ENCODE measurements at regions of chr17 and their contacts with region 1.

Region 1: GRCh38 chr17:65556014-65556909 is 5.2 kb downstream of the AXIN2 start:
- DNase-seq: peak; percentile 82
- ATAC-seq: peak; percentile 41
- H3K4me3 ChIP-seq: no peak overlapping the region
- H3K27ac ChIP-seq: peak overlapping the region; percentile 96
- H3K4me1 ChIP-seq: no peaks in the 10 kb centered on the region
- H3K27me3 ChIP-seq: no peaks in the 10 kb centered on the region; a peak in 1 of 5 replicates
- CTCF ChIP-seq: peak; percentile 94
- EP300 ChIP-seq: no peak
- POLR2A ChIP-seq: 0 out of 4 replicates have a peak, but pooled peaks of 1 of the 2 experiments have one; percentile 33
- RAD21 ChIP-seq: peak; percentile 74

Region 2: DNA sequence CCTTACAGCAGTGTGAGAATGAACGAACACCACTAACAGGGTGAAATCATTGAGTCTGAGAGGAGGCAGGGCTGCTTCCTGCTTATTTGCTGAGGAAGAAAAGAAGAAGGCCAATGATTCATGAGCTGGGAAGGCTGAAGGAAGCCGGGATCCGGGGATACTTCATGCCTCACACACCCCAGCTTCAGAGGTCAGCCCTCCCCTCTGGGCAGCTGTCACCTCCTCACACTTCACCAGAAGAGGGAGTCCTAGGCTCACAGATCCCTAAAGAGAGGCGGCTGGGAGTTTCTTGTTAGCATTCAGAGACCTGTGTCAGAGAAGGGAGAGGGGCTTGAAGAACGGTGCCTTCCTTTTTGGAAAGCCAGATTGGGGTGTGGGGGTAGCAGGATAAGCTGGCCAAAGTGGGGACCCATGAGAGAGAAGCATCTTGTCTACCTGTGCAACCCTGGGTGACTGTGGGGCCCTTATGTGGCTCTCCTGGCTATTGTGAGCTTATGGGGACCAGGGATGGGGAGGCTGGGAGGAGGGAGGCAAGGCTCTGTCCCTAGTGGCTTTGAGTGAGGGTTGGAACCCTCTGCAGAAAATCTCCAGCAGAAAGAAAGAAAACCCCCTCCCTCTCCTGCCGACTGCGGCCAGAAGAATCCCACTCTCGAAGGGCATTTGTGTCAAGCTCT is 324.5 kb before region 1 on chr17:
- CTCF ChIA-PET with region 1: no interaction called
- POLR2A ChIA-PET with region 1: no interaction called
- in situ Hi-C with region 1: no loop called
- intact Hi-C with region 1: loop called (anchors 2 kb)
- DNase-seq: peak; percentile 70
- ATAC-seq: peak; percentile 97
- H3K4me3 ChIP-seq: no peak overlapping the region
- H3K27ac ChIP-seq: no peak overlapping the region
- H3K4me1 ChIP-seq: no peaks in the 10 kb centered on the region
- H3K27me3 ChIP-seq: peaks cover 3 to 11% of the 10 kb centered on the region in 2 experiments; a peak in 3 of 5 replicates
- CTCF ChIP-seq: peak; percentile 90
- EP300 ChIP-seq: no peak
- POLR2A ChIP-seq: no peak
- RAD21 ChIP-seq: peak; percentile 76

Region 3: DNA sequence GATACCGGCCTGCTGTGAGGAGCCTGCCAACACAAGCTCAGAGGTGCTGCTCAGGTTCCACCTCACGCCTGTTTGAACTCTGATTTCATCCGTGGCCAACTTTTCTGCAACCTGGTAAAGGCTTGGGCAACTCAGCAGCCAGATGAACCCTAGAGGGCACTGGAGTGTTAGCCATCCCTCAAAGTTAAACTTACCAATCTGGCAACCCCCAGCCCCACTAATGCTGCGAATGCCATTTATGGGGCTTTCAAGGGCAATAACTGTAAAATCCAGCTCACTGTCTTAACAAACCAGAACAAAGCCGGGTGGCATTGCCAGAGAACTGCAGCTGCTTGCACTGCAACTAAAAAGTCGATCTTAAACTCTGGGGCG is 100.3 kb before region 1 on chr17:
- CTCF ChIA-PET with region 1: interaction called, 8 read pairs
- POLR2A ChIA-PET with region 1: no interaction called
- in situ Hi-C with region 1: no loop called
- intact Hi-C with region 1: loop called (anchors 1 kb)
- DNase-seq: peak; percentile 45
- ATAC-seq: peak; percentile 87
- H3K4me3 ChIP-seq: peak overlapping the region in 1 of 3 experiments; percentile 34; a peak in 1 of 6 replicates
- H3K27ac ChIP-seq: no peak overlapping the region
- H3K4me1 ChIP-seq: peaks cover 21% of the 10 kb centered on the region
- H3K27me3 ChIP-seq: peaks cover 6 to 26% of the 10 kb centered on the region in 2 experiments; a peak in 3 of 5 replicates
- CTCF ChIP-seq: peak; percentile 82
- EP300 ChIP-seq: no peak
- POLR2A ChIP-seq: no peak
- RAD21 ChIP-seq: peak; percentile 74

Region 4: GRCh38 chr17:65588176-65588808 is 32.0 kb after region 1 on chr17:
- CTCF ChIA-PET with region 1: no interaction called
- POLR2A ChIA-PET with region 1: interaction called, 14 read pairs
- in situ Hi-C with region 1: no loop called
- intact Hi-C with region 1: no loop called
- DNase-seq: peak; percentile 99
- ATAC-seq: peak; percentile 81
- H3K4me3 ChIP-seq: peak overlapping the region; percentile 3 to 47 (median 25); a peak in 3 of 6 replicates
- H3K27ac ChIP-seq: peak overlapping the region; percentile 14
- H3K4me1 ChIP-seq: peaks cover 82% of the 10 kb centered on the region
- H3K27me3 ChIP-seq: no peaks in the 10 kb centered on the region
- CTCF ChIP-seq: peak; percentile 58
- EP300 ChIP-seq: peak in 1 of 2 experiments; percentile 90; a peak in 2 of 4 replicates
- POLR2A ChIP-seq: no peak
- RAD21 ChIP-seq: peak; percentile 67; the same call in 1 of the 2 replicates

Region 5: DNA sequence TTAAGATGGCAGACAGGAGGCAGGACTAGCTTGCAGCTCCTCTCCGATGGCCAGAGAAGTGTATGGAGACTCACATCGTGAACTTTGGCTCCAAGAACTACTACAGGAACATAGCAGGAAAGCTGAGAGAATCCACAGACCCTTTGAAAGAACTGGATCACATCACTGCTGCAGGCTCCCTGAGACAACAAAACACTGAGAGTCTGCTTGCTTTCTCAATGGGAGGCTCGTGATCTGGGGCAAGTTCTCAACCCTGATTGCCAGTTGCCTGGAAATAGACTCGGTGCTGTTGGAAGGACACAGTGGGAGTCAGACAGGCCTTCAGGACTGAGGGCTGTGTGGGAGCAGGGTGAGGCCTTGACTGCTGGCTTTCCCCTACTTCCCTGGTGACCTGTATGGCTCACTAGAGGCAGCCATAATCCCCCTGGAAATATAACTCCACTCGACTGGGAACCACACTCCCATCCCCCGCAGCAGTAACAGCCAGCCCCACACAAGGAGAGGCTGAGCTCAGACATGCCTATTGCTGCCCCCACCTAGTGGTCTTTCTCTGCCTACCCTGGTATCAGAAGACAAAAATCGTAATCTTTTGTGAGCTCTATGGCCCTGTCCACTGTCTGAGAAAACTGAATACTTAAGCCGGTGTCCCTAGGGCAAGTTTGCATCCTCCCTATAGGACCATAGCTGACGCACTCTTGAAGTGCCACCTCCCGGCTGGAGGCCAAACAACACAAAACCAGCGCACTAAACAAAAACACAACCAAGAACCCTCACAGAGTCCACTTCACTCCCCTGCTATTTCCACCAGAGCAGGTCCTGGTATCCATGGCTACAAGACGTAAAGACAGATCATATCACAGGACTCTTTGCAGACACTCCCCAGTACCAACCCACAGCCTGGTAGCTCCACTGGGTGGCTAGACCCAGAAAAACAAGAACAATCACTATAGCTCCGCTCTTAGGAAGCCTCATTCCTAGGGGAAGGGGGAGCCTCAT is 397.4 kb after region 1 on chr17:
- CTCF ChIA-PET with region 1: no interaction called
- POLR2A ChIA-PET with region 1: interaction called, 3 read pairs
- in situ Hi-C with region 1: no loop called
- intact Hi-C with region 1: loop called (anchors 10 kb)
- DNase-seq: peak; percentile 47
- ATAC-seq: peak; percentile 90
- H3K4me3 ChIP-seq: peak overlapping the region; percentile 17 to 52 (median 17); a peak in 5 of 6 replicates
- H3K27ac ChIP-seq: no peak overlapping the region
- H3K4me1 ChIP-seq: peaks cover 13% of the 10 kb centered on the region; the same call in 1 of the 2 replicates
- H3K27me3 ChIP-seq: no peaks in the 10 kb centered on the region
- CTCF ChIP-seq: peak; percentile 66
- EP300 ChIP-seq: no peak
- POLR2A ChIP-seq: 0 out of 4 replicates have a peak, but pooled peaks of 1 of the 2 experiments have one; percentile 28
- RAD21 ChIP-seq: no peak